Activated B cell treated with CpG ODN at 0.5 μM for 24 hours (primary cell): ENCODE measurements at regions of chr15 and their contacts with region 1.

Region 1: GRCh38 chr15:45457641-45458433 is 64.7 kb downstream of the SLC30A4 start:
- DNase-seq: peak; percentile 26
- ATAC-seq: peak; percentile 74
- H3K4me3 Mint-ChIP-seq: peak overlapping the region; percentile 78
- H3K27ac Mint-ChIP-seq: peak overlapping the region; percentile 87
- H3K4me1 Mint-ChIP-seq: peaks cover 44% of the 10 kb centered on the region
- H3K27me3 Mint-ChIP-seq: no peaks in the 10 kb centered on the region
- CTCF ChIP-seq: peak; percentile 91

Region 2: GRCh38 chr15:45022871-45023658 is 434.8 kb before region 1 on chr15 and contains the start of gene SORD:
- CTCF ChIA-PET with region 1: no interaction called
- POLR2A ChIA-PET with region 1: no interaction called
- intact Hi-C with region 1: loop called (anchors 10 kb)
- DNase-seq: peak; percentile 91
- ATAC-seq: peak; percentile 100
- H3K4me3 Mint-ChIP-seq: peak within 1 kb of the TSS; percentile 89
- H3K27ac Mint-ChIP-seq: no peak within 1 kb of the TSS
- H3K4me1 Mint-ChIP-seq: peaks cover 27% of the 10 kb centered on the region
- H3K27me3 Mint-ChIP-seq: peaks cover 15% of the 10 kb centered on the region
- CTCF ChIP-seq: no peak
- total RNA-seq, gene SORD: 15.1 and 15.5 TPM in 2 replicates

Region 3: GRCh38 chr15:45166834-45167630 is 290.8 kb before region 1 on chr15:
- CTCF ChIA-PET with region 1: interaction called, 12 read pairs
- POLR2A ChIA-PET with region 1: no interaction called
- intact Hi-C with region 1: loop called (anchors 1 kb)
- DNase-seq: peak; percentile 75
- ATAC-seq: peak; percentile 95
- H3K4me3 Mint-ChIP-seq: peak overlapping the region; percentile 81
- H3K27ac Mint-ChIP-seq: peak overlapping the region; percentile 80
- H3K4me1 Mint-ChIP-seq: peaks cover 32% of the 10 kb centered on the region
- H3K27me3 Mint-ChIP-seq: no peaks in the 10 kb centered on the region
- CTCF ChIP-seq: no peak

Region 4: GRCh38 chr15:45307230-45307924 is 150.5 kb before region 1 on chr15:
- CTCF ChIA-PET with region 1: interaction called, 3 read pairs
- POLR2A ChIA-PET with region 1: no interaction called
- intact Hi-C with region 1: loop called (anchors 1 kb)
- DNase-seq: no peak
- ATAC-seq: no peak
- H3K4me3 Mint-ChIP-seq: peak overlapping the region; percentile 79
- H3K27ac Mint-ChIP-seq: peak overlapping the region; percentile 50
- H3K4me1 Mint-ChIP-seq: peaks cover 4% of the 10 kb centered on the region
- H3K27me3 Mint-ChIP-seq: peaks cover 34% of the 10 kb centered on the region
- CTCF ChIP-seq: no peak

Region 5: GRCh38 chr15:45429974-45430792 is 27.7 kb before region 1 on chr15:
- CTCF ChIA-PET with region 1: interaction called, 79 read pairs
- POLR2A ChIA-PET with region 1: no interaction called
- intact Hi-C with region 1: loop called (anchors 1 kb)
- DNase-seq: peak; percentile 87
- ATAC-seq: peak; percentile 94
- H3K4me3 Mint-ChIP-seq: peak overlapping the region; percentile 35
- H3K27ac Mint-ChIP-seq: no peak overlapping the region
- H3K4me1 Mint-ChIP-seq: peaks cover 4% of the 10 kb centered on the region
- H3K27me3 Mint-ChIP-seq: peaks cover 2% of the 10 kb centered on the region
- CTCF ChIP-seq: peak; percentile 98

Region 6: DNA sequence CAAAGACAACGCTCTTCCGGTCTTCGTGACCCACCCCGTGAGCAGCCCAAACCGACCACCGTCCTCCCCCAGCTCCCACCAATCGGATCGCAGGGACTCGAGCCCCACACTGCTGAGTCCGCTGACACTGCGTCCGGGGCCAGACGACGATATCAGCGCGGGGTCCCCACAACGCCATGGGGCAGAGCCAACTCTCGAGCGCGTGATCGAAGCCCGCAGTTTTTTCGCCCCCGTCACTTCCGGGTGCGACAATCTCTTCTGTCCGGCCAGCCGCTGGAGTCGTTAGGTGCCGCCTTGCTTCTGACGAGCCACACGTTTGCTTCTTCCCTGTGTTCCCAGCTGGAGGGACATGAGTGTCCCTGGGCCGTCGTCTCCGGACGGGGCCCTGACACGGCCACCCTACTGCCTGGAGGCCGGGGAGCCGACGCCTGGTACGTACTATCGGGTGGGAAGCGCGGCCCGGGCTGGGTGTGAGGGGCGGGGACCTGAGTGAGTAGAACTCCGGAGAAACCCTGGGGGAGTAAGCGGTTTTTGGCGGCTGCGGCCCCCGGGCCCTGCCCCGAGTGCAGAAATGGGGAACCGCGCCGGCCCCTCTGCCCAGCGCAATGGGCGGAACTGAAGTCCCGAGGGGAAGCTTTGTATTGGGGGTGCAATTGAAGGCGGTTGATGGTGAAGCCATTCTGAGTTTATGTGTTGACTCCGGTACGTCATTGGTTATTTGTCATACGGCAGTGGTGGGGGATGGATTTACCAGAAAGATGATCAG is 129.4 kb after region 1 on chr15 and contains the start of gene BLOC1S6:
- CTCF ChIA-PET with region 1: interaction called, 30 read pairs
- POLR2A ChIA-PET with region 1: interaction called, 10 read pairs
- intact Hi-C with region 1: loop called (anchors 1 kb)
- DNase-seq: peak; percentile 93
- ATAC-seq: peak; percentile 87
- H3K4me3 Mint-ChIP-seq: peak within 1 kb of the TSS; percentile 99
- H3K27ac Mint-ChIP-seq: peak within 1 kb of the TSS; percentile 100
- H3K4me1 Mint-ChIP-seq: peaks cover 44% of the 10 kb centered on the region
- H3K27me3 Mint-ChIP-seq: no peaks in the 10 kb centered on the region
- CTCF ChIP-seq: no peak
- total RNA-seq, gene BLOC1S6: 39.4 and 41.2 TPM in 2 replicates